ENCODE measurements at regions of chrX and their contacts with region 1.

Region 1: DNA sequence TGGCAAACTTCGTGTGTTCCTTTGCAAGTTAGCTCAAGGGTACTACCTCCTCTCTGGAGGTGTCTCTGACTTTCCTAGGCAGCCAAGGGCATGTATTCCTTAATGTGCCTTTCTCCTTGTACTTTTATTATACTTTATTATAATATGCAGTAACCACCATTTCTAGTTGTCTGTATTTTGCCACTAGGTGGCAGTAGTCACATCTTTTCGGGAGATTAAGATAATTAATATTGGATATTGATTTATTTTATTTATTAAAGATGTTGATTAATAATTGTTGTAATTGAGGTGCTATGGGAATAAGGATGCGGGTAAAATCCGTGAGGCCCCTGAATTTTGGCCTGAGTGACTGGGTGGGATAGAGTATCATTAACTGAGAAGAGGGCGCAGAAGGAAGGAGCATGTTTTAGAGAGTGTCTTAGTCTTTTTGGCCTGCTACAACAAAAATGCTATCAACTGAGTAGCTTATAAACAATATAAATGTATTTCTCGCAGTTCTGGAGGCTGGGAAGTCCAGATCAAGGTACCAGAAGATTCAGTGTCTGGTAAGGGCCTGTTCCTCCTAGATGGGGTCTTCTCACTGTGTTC is 153.3 kb downstream of the TMEM164 start:
- DNase-seq: no peak
- H3K4me3 ChIP-seq: no peak overlapping the region
- H3K27ac ChIP-seq: no peak overlapping the region
- H3K4me1 ChIP-seq: peaks cover 0 to 6% of the 10 kb centered on the region in 2 donors
- H3K27me3 ChIP-seq: no peaks in the 10 kb centered on the region
- CTCF ChIP-seq: peak; percentile 25 to 79 (median 42)
- POLR2A ChIP-seq: no peak

Region 2: DNA sequence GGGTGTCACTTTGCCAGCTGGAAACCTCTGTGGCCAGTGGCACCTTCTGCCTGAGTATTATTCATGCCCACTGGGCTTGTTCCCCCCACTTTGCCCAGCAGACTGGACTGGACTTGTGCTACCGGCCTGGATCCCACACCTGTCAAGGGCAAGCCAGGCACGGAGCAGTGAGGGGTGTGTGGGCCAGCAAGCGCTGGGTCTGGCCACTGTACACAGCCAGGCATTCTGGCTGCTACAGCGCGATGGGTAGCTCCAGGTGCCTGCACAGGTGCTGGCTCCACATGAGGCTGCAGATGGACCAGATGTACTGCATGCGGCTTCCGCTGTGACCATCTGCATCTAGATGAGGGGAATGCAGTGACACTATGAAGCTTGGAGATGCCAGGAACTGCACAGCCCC is 570.8 kb before region 1 on chrX:
- intact Hi-C with region 1: no loop called
- DNase-seq: no peak
- H3K4me3 ChIP-seq: no peak overlapping the region
- H3K27ac ChIP-seq: no peak overlapping the region
- H3K4me1 ChIP-seq: no peaks in the 10 kb centered on the region
- H3K27me3 ChIP-seq: peaks cover 36% of the 10 kb centered on the region
- CTCF ChIP-seq: no peak
- POLR2A ChIP-seq: no peak

Region 3: GRCh38 chrX:110120025-110120424 is 36.2 kb before region 1 on chrX:
- intact Hi-C with region 1: no loop called
- DNase-seq: no peak
- H3K4me3 ChIP-seq: no peak overlapping the region
- H3K27ac ChIP-seq: no peak overlapping the region
- H3K4me1 ChIP-seq: no peaks in the 10 kb centered on the region
- H3K27me3 ChIP-seq: no peaks in the 10 kb centered on the region
- CTCF ChIP-seq: no peak
- POLR2A ChIP-seq: no peak

Region 4: GRCh38 chrX:110407910-110408545 is 251.8 kb after region 1 on chrX:
- intact Hi-C with region 1: loop called (anchors 2 to 5 kb)
- DNase-seq: peak; percentile 27 to 75 (median 66)
- H3K4me3 ChIP-seq: no peak overlapping the region
- H3K27ac ChIP-seq: no peak overlapping the region
- H3K4me1 ChIP-seq: no peaks in the 10 kb centered on the region
- H3K27me3 ChIP-seq: peaks cover 3% of the 10 kb centered on the region
- CTCF ChIP-seq: peak; percentile 69 to 83 (median 73)
- POLR2A ChIP-seq: no peak

Region 5: GRCh38 chrX:110706446-110706845 is 550.2 kb after region 1 on chrX:
- intact Hi-C with region 1: no loop called
- DNase-seq: no peak
- H3K4me3 ChIP-seq: no peak overlapping the region
- H3K27ac ChIP-seq: no peak overlapping the region
- H3K4me1 ChIP-seq: no peaks in the 10 kb centered on the region
- H3K27me3 ChIP-seq: peaks cover 4% of the 10 kb centered on the region
- CTCF ChIP-seq: no peak
- POLR2A ChIP-seq: no peak

Measured in adrenal gland (tissue), 19 donors.